ENCODE measurements at regions of chr2 and their contacts with region 1.

Region 1: GRCh38 chr2:152743002-152743401 is 24.6 kb downstream of the ARL6IP6 start:
- DNase-seq: no peak
- H3K4me3 ChIP-seq: no peak overlapping the region
- H3K27ac ChIP-seq: no peak overlapping the region
- H3K27me3 ChIP-seq: no peaks in the 10 kb centered on the region
- CTCF ChIP-seq: peak; percentile 66

Region 2: GRCh38 chr2:152730591-152731303 is 12.3 kb before region 1 on chr2:
- CTCF ChIA-PET with region 1: interaction called, 16 read pairs
- POLR2A ChIA-PET with region 1: no interaction called
- DNase-seq: no peak
- H3K4me3 ChIP-seq: no peak overlapping the region
- H3K27ac ChIP-seq: no peak overlapping the region
- H3K27me3 ChIP-seq: no peaks in the 10 kb centered on the region
- CTCF ChIP-seq: no peak

Region 3: DNA sequence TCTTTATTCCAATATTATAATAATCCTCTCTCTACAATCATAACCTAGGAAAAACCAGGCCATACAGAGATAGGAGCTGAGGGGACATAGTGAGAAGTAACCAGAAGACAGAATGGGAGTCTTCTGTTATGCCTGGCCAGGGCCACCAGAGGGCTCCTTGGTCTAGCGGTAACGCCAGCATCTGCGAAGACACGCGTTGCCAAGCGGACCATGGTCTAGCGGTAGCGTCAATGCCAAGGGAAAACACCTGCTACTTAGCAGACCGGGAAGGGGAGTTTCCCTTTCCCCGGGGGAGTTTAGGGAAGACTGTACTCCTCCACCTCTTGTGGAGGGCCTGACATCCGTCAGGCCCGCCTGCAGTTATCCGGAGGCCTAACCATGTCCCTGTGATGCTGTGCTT is 12.0 kb after region 1 on chr2:
- CTCF ChIA-PET with region 1: interaction called, 21 read pairs
- POLR2A ChIA-PET with region 1: no interaction called
- DNase-seq: no peak
- H3K4me3 ChIP-seq: no peak overlapping the region
- H3K27ac ChIP-seq: no peak overlapping the region
- H3K27me3 ChIP-seq: no peaks in the 10 kb centered on the region
- CTCF ChIP-seq: peak; percentile 23; the same call in 1 of the 2 replicates

Region 4: DNA sequence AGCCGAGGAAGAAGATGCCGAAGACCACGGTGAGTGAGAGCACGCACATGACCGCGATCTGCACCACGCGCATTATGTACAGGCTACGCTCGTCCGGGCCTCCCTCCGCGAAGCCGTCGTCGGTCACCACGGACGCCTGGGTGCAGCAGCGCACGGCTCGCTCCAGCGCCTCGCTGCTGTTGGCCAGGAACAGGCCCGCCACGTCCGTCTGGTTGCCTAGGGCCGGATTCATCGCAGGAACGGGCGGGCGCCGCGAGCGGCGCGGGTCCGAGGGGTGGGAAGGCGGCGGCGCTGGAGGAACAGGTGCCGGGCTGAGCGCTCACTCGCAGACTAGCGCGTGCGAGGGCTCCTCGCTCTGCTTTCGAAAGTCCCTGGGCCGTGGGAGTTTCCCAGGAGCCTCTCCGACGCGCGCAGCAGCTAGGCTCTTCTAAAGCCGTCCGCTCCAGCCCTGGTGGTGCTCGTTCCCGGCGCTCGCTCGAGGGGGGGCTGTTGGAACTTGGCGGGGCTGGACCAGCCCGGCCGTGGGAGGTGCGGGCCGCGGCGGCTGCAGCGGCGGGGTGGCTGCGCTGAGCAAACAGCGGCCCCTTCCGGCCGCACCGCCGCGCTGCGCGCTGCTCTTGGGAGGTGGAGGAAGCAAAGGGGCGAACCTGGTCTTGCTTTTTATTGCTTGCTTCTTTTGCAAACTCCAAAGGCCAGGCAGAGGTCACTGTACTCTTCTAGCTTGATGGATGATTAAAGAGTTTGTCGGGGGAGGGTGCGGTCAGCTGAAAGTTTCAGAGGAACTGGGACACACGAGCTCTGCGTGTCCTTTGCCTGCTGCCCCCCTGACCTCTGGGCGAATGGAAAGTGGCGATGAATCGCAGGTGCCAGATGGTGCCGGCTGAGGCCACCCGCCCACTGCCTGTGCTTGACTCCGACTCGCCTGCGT is 735.6 kb after region 1 on chr2 and contains the start of gene RPRM:
- CTCF ChIA-PET with region 1: interaction called, 19 read pairs
- POLR2A ChIA-PET with region 1: no interaction called
- DNase-seq: peak; percentile 1
- H3K4me3 ChIP-seq: peak within 1 kb of the TSS; percentile 50
- H3K27ac ChIP-seq: no peak within 1 kb of the TSS
- H3K27me3 ChIP-seq: peaks cover 22% of the 10 kb centered on the region
- CTCF ChIP-seq: peak; percentile 65
- polyA plus RNA-seq, gene RPRM: not detected in 2 replicates

Region 5: DNA sequence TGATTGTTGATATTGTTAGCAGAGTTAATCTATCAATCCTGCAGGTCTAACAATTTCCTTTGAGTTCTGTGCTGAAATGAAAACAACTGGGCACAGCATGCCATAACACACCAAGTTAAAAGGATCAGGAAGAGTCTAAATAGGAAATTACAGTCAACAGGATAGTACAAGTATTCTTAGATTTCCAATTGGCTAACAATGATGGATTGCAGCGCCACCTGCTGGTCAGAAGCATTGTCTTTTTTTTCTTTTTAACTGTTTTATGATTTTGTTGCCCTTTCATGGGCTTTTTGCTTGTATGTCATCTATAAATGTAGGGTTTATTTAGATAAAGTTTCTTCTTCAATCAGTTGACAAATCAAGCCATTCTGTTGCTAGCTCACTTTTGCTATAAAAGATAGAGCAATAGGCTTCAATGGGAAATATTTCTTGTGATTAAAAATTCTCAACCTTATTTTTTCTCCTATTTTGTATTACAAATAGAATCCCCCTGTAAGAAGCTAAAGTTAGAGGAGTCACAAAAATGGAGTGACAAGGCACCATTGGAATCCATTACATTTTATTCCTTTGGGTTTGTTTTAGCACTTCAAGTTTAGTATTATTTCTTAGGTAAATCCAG is 776.4 kb after region 1 on chr2:
- CTCF ChIA-PET with region 1: interaction called, 15 read pairs
- POLR2A ChIA-PET with region 1: no interaction called
- DNase-seq: peak; percentile 2
- H3K4me3 ChIP-seq: no peak overlapping the region
- H3K27ac ChIP-seq: no peak overlapping the region
- H3K27me3 ChIP-seq: no peaks in the 10 kb centered on the region
- CTCF ChIP-seq: peak; percentile 60

Measured in AG04450 (cell line).